Heart right ventricle (tissue), 16 donors: ENCODE measurements at regions of chr7 and their contacts with region 1.

Region 1: DNA sequence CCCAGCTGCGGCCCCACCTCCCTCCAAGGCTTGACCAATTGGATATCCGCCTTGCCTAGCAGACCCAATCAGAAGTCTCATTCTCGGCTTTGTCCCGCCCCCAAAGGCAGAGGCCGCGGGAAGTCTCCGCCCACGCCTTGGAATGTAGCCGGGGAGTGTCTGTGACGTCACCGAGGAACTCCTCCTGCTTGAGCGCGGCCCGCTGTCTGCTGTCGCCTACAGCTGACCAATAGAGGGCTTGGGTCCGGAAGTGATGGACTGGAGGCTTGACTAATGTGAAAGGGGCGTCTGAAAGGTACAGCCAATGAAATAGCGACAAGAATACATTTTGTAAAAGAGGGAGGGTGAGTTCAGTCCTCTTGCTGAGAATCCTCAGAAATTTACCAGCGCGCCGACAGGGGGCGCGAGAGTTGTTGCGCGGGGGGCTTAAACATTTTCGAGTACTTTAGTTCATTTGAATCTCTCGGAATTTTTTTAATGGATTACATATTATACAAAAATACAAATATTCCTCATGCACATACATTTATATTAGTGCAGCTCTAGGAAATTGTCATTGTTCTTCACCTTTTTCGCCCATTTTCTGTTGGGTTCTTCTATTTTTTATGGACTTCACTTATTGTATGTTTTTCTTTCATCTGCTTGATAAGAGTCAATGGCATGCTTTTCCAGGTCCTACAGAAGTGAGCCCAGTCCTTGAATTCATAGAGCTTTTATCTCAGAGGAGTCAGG is 376 bp upstream of the CREB3L2 start:
- DNase-seq: peak; percentile 98 to 99
- ATAC-seq: peak; percentile 95 to 98 (median 96)
- H3K4me3 ChIP-seq: peak overlapping the region; percentile 66 to 99 (median 84)
- H3K27ac ChIP-seq: peak overlapping the region; percentile 70 to 97 (median 94)
- H3K4me1 ChIP-seq: peaks cover 2 to 40% (median 33%) of the 10 kb centered on the region in 9 donors
- H3K27me3 ChIP-seq: no peaks in the 10 kb centered on the region
- CTCF ChIP-seq: peak; percentile 84 to 98 (median 95)

Region 2: DNA sequence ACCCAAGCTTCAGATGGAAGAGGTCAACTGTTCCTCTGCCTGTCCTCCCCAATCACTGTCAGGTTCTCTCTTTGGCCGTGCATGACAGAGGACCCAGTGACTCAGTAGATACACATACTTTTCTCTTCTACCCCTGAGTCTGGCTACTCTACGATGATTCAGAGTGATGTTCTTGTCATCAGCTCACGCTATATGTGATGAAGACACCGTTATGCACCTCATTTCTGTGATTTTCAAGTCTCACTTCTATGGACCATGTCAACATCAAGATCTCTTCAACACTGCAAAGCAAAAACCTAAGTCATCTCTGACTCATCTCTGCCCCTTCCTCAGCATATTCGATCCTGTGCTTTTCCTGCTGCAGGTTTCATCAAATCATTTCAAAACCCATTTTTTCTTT is 78.9 kb before region 1 on chr7:
- intact Hi-C with region 1: loop called in 1 of 10 experiments (anchors 5 kb)
- DNase-seq: no peak
- ATAC-seq: no peak
- H3K4me3 ChIP-seq: no peak overlapping the region
- H3K27ac ChIP-seq: no peak overlapping the region
- H3K4me1 ChIP-seq: peaks cover 6 to 34% (median 17%) of the 10 kb centered on the region in 9 donors
- H3K27me3 ChIP-seq: no peaks in the 10 kb centered on the region
- CTCF ChIP-seq: no peak

Region 3: GRCh38 chr7:138515001-138515528 is 512.8 kb after region 1 on chr7:
- intact Hi-C with region 1: no loop called
- DNase-seq: no peak
- ATAC-seq: no peak
- H3K4me3 ChIP-seq: no peak overlapping the region
- H3K27ac ChIP-seq: no peak overlapping the region
- H3K4me1 ChIP-seq: peaks cover 0 to 21% (median 8%) of the 10 kb centered on the region in 9 donors
- H3K27me3 ChIP-seq: no peaks in the 10 kb centered on the region
- CTCF ChIP-seq: no peak